ENCODE measurements at regions of chr10 and their contacts with region 1.

Region 1: DNA sequence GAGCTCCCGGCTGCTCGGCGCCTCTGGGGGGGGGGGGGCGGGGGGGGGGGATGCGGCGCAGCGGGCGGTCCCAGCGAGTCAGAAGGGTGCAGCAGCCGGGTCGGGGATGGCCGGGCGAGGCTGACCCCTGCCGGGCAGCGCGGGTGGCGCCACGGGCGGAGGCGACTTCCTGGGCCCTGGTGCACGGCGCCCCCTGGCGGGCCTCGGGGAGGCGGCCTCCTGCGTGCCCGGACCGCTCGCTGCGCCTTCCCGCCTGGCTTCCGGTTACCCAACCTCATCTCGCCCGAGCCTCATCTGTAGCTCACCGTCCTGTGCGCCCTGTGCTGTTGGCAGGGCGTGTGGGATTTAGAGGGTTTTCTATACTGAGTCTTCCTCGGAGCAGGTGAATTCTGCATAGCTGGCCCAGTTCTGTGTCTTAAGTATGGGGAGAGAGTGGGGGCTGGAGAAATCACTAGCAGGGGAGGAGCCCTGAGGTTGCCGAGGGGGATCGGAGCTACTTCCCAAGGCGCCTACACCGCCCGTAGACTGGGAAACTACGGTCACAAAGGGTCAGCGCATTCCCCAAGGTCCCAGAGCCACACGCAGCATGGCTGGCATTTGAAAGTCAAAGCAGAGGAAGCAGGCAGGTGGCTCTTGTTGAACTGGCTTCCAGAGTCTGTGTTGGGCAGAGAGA is 28.3 kb upstream of the WDFY4 start:
- DNase-seq: peak; percentile 85
- H3K4me3 Mint-ChIP-seq: peak overlapping the region; percentile 64
- H3K27ac Mint-ChIP-seq: no peak overlapping the region
- H3K4me1 Mint-ChIP-seq: peaks cover 6% of the 10 kb centered on the region
- H3K27me3 Mint-ChIP-seq: peaks cover 32% of the 10 kb centered on the region

Region 2: DNA sequence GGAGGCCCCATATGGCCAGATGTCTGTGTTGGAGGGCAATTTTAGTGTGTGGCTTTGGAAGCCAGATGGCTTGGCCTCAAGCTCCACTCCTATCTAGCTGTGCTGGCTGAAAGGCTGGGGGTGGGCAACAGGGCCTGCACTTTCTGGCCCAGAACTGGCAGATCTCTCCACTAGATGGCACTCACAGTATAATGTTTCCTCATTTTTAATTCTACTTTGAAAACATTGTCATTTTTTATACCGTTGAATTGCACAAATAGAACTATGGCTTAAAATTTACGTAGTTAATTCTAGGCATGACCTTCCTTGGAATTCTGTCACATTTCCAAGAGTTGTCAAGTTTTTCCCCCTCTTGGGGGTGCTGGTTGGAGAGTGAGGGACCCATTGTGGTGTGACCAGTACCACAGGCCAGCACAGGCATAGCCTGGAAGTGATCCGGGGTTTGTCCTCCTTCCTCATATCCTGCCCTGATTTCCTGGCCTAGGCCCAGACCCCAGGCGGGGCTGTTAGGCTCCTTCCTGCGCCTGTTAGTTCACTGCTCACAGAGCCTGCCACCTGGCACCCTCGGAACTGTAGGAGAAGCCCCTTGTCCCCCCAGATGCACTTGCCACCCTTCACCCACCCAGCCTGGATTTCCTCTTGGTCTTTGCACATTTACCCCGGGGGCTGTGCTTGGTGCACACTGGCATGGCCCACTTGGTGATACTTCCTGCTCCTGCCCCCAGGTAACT is 104.4 kb before region 1 on chr10:
- CTCF ChIA-PET with region 1: interaction called, 14 read pairs
- POLR2A ChIA-PET with region 1: no interaction called
- DNase-seq: peak; percentile 16
- H3K4me3 Mint-ChIP-seq: no peak overlapping the region
- H3K27ac Mint-ChIP-seq: no peak overlapping the region
- H3K4me1 Mint-ChIP-seq: no peaks in the 10 kb centered on the region
- H3K27me3 Mint-ChIP-seq: no peaks in the 10 kb centered on the region

Region 3: GRCh38 chr10:48577158-48577557 is 79.2 kb before region 1 on chr10:
- CTCF ChIA-PET with region 1: no interaction called
- POLR2A ChIA-PET with region 1: no interaction called
- DNase-seq: no peak
- H3K4me3 Mint-ChIP-seq: no peak overlapping the region
- H3K27ac Mint-ChIP-seq: no peak overlapping the region
- H3K4me1 Mint-ChIP-seq: no peaks in the 10 kb centered on the region
- H3K27me3 Mint-ChIP-seq: peaks cover 13% of the 10 kb centered on the region

Region 4: DNA sequence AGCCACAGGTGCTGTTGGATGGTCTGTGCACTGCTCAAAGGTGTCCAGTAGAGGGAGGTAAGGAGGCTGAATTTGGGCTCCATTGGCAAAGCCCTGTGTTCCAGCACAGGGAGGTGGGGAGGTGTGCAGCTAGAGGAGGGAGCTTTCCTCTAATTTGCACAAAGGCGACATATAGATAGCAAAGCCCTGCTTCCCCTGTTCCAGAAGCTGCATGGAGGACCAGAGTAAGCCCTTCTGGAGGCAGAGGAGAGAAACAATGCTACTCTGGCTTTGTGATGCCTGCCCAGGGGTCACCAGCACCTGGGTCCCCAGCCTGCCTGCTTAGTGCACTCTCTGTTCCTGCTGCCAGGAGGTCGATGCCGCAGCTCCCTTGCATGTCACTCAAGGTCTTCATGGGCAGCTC is 48.1 kb before region 1 on chr10:
- CTCF ChIA-PET with region 1: interaction called, 33 read pairs
- POLR2A ChIA-PET with region 1: interaction called, 3 read pairs
- DNase-seq: peak; percentile 38
- H3K4me3 Mint-ChIP-seq: no peak overlapping the region
- H3K27ac Mint-ChIP-seq: no peak overlapping the region
- H3K4me1 Mint-ChIP-seq: peaks cover 2% of the 10 kb centered on the region
- H3K27me3 Mint-ChIP-seq: peaks cover 38% of the 10 kb centered on the region

Region 5: DNA sequence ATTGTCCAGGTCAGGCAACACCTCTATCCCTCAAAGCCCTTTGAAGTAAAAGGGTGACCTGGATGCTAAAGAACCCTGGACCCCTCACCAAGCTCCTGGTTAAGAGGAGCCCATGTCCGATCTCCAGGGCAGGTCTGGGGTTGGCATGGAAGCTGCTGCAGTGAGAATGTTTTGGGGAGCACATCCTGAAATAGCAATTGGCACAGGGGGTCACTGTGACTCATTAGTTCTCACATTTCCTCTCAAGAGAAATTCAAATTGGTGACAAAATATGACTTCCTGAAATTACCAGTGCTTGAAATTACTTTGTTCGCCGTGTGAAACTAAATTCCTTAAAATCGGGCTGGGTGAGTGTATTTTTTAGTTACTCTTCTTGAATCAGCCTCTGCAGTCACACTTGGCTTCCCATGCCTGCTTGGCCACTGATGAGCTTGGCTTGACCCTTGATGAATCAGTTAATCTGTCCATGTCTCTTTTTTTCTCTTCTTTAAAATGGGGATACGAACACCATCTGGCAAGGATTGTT is 32.7 kb before region 1 on chr10:
- CTCF ChIA-PET with region 1: interaction called, 11 read pairs
- POLR2A ChIA-PET with region 1: no interaction called
- DNase-seq: no peak
- H3K4me3 Mint-ChIP-seq: no peak overlapping the region
- H3K27ac Mint-ChIP-seq: no peak overlapping the region
- H3K4me1 Mint-ChIP-seq: no peaks in the 10 kb centered on the region
- H3K27me3 Mint-ChIP-seq: peaks cover 26% of the 10 kb centered on the region

Region 6: GRCh38 chr10:48634198-48634983 is 22.0 kb before region 1 on chr10:
- CTCF ChIA-PET with region 1: interaction called, 27 read pairs
- POLR2A ChIA-PET with region 1: no interaction called
- DNase-seq: peak; percentile 34
- H3K4me3 Mint-ChIP-seq: no peak overlapping the region
- H3K27ac Mint-ChIP-seq: no peak overlapping the region
- H3K4me1 Mint-ChIP-seq: peaks cover 20% of the 10 kb centered on the region
- H3K27me3 Mint-ChIP-seq: peaks cover 30% of the 10 kb centered on the region

Measured in activated CD4-positive, alpha-beta T cell treated with anti-CD3 and anti-CD28 coated beads, Interleukin-2, amount 10 ng/mL, durations not matched to agents 7 days and 5 days (primary cell).